Activated T-helper 1 cell treated with anti-CD3 and anti-CD28 coated beads, Interleukin-12 subunit alpha, Interleukin-12 subunit beta, Interleukin-2, Interleukin-4 antibody, amounts not matched to agents 30 ng/mL and 10 ng/mL and 1 ng/mL, durations not matched to agents 14 hours and 24 hours and 36 hours (primary cell): ENCODE measurements at regions of chr2 and their contacts with region 1.

Region 1: GRCh38 chr2:25851740-25852503 is 26.4 kb downstream of the ASXL2 start:
- DNase-seq: peak; percentile 44
- H3K4me3 Mint-ChIP-seq: peak overlapping the region; percentile 43
- H3K27ac Mint-ChIP-seq: peak overlapping the region; percentile 84
- H3K4me1 Mint-ChIP-seq: peaks cover 37% of the 10 kb centered on the region
- H3K27me3 Mint-ChIP-seq: no peaks in the 10 kb centered on the region

Region 2: DNA sequence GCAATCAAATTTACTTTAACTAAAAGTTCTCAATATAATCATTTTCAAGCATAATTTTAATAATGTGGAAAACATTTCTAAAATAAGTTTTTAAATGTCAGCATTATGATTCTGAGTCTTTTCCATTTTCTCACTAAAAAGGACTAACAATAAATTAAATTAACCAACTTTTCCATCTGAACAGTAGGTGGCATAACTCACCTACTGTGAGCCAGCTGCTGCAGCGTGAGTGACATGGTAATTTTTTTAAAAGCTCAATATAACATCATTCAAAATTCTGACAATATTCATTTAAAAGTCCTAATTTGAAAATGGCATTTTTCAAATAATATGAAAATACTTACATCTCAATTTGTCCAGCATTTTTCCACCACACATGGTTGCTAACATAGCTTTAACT is 245.0 kb before region 1 on chr2:
- intact Hi-C with region 1: loop called (anchors 1 kb)
- DNase-seq: no peak
- H3K4me3 Mint-ChIP-seq: no peak overlapping the region
- H3K27ac Mint-ChIP-seq: no peak overlapping the region
- H3K4me1 Mint-ChIP-seq: peaks cover 24% of the 10 kb centered on the region
- H3K27me3 Mint-ChIP-seq: no peaks in the 10 kb centered on the region

Region 3: DNA sequence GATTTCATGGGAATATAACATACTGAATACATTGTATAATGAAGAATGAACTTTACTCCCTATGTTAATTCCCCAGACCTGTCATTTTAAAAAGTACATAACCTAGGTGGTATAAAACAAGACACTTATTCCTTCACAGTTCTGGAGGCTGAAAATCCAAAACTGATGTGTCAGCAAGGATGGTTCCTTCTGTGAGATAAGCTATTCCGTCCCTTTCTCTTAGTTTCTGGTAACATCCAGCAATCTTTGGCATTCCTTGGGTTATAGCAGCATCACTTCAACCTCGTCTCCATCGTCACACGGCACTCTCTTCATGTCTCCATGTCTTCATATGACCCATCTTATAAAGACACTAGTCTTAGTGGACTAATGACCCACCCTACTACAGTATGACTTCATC is 67.5 kb before region 1 on chr2:
- intact Hi-C with region 1: no loop called
- DNase-seq: no peak
- H3K4me3 Mint-ChIP-seq: no peak overlapping the region
- H3K27ac Mint-ChIP-seq: no peak overlapping the region
- H3K4me1 Mint-ChIP-seq: peaks cover 18% of the 10 kb centered on the region
- H3K27me3 Mint-ChIP-seq: no peaks in the 10 kb centered on the region

Region 4: GRCh38 chr2:25794544-25795276 is 57.2 kb before region 1 on chr2:
- intact Hi-C with region 1: loop called (anchors 1 kb)
- DNase-seq: no peak
- H3K4me3 Mint-ChIP-seq: peak overlapping the region; percentile 87
- H3K27ac Mint-ChIP-seq: peak overlapping the region; percentile 86
- H3K4me1 Mint-ChIP-seq: peaks cover 67% of the 10 kb centered on the region
- H3K27me3 Mint-ChIP-seq: no peaks in the 10 kb centered on the region

Region 5: GRCh38 chr2:25825238-25825637 is 26.7 kb before region 1 on chr2:
- intact Hi-C with region 1: loop called (anchors 2 kb)
- DNase-seq: peak; percentile 26
- H3K4me3 Mint-ChIP-seq: peak overlapping the region; percentile 50
- H3K27ac Mint-ChIP-seq: peak overlapping the region; percentile 69
- H3K4me1 Mint-ChIP-seq: peaks cover 69% of the 10 kb centered on the region
- H3K27me3 Mint-ChIP-seq: no peaks in the 10 kb centered on the region

Region 6: DNA sequence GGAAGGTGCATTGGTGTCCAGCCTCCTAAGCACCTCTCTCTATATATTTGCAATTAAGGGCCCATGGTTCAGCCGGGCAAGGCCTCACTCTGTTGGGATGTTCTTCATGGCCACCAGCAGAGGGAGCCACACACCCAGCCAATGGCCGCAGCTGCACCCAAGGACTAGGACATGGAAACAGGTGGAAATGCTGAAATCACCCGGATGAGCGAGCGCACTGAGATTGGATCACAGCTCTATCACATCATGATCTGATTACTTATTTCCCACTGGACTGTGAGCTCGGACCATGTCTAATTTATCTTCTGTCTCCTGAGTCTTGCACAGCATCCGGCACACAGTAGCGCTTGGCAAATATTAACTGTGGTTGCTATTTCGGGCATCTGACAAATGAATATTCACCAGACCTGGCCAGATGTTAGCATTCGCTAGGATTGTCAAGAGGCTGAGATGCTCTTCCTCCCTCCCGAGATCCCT is 99.2 kb after region 1 on chr2:
- intact Hi-C with region 1: loop called (anchors 1 kb)
- DNase-seq: peak; percentile 50
- H3K4me3 Mint-ChIP-seq: no peak overlapping the region
- H3K27ac Mint-ChIP-seq: peak overlapping the region; percentile 37
- H3K4me1 Mint-ChIP-seq: peaks cover 5% of the 10 kb centered on the region
- H3K27me3 Mint-ChIP-seq: peaks cover 2% of the 10 kb centered on the region

Region 7: GRCh38 chr2:26144953-26145680 is 293.2 kb after region 1 on chr2:
- intact Hi-C with region 1: loop called (anchors 5 kb)
- DNase-seq: peak; percentile 43
- H3K4me3 Mint-ChIP-seq: no peak overlapping the region
- H3K27ac Mint-ChIP-seq: no peak overlapping the region
- H3K4me1 Mint-ChIP-seq: no peaks in the 10 kb centered on the region
- H3K27me3 Mint-ChIP-seq: peaks cover 7% of the 10 kb centered on the region